ENCODE measurements at regions of chr16 and their contacts with region 1.

Region 1: DNA sequence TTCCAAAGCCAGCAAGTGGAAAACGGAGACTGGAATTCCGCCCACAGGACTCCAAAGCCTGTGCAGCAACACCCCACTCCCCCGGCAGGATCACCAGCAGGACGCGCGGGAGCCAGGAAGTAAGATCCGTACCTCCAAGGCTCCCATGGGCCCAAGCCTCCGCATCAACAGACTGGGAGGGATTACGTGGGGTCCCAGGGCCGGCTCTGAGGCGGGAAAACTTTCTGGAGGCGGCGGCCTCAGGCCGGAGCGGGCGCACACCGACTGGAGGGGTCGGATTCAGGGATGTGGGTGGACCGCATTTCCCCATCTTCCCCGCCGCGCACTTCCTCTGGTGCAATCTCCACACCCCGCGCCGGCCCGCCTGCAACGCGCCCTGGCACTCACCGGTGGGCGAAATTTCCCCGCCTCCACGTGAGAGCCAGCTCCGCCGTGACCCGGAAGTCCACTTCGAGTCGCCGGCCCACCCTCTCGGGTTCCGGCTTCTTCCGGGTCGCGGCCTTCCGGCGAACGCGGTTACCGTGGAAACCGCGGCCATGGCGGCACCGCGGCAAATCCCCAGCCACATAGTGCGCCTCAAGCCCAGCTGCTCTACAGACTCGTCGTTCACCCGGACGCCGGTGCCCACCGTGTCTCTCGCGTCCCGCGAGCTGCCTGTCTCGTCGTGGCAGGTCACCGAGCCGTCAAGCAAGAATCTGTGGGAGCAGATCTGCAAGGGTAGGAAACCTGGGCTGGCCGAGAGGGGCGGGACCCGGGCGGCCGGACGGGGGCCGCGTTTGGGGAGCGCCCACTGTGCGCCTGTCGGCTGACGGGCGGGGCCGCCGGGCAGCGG is at the starts of genes IQCK and KNOP1:
- DNase-seq: peak; percentile 83 to 87
- ATAC-seq: peak; percentile 89 to 90
- H3K4me3 ChIP-seq: peak within 1 kb of the TSS; percentile 83 to 95 (median 94)
- H3K27ac ChIP-seq: peak within 1 kb of the TSS; percentile 82 to 87 (median 86)
- H3K4me1 ChIP-seq: peaks cover 27% of the 10 kb centered on the region in 2 donors
- H3K27me3 ChIP-seq: no peaks in the 10 kb centered on the region
- CTCF ChIP-seq: peak in 2 of 5 experiments; percentile 26 to 28
- POLR2A ChIP-seq: peak; percentile 53 to 56
- total RNA-seq, gene IQCK: 8.3 to 17.3 (median 9.4) TPM
- total RNA-seq, gene KNOP1: 4.1 to 9.2 (median 5.5) TPM

Region 2: DNA sequence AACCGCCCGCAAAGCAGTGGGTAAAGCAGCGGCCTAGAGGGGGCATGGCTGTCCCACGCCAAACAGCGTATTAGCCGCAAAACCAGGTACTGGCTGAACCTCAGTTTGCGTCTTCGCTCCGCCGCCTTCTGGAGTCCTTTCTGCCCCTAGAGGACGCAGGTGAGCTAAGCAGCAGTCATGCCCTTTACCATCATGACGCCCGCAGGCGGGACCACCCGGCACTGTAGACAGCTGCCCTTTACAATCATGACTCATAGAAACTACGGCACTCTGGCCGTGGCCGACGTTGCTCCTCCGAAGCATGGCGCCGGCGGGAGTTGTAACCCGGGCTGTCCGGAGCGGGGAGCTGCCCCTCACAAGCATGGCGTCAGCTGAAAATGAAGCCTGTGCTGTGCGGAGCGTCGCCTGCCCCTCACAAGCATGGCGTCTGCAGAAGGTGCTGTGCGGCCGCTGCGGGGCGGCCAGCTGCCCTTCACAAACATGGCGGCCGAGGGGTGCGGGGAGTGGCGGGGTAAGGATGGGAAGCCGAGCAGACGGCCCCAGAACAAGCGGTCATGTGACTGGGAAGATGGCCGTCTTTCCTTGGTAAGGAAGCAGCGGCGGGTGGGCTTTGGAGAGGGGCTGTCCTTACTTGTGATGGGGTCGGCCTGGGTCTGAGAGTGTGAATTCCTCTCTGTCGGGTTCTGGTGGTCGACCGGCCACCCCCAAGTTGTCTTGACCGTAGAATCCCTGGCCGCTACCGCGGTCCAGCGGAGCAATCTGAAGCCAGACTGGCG is 162.6 kb before region 1 on chr16 and contains the start of gene VPS35L:
- in situ Hi-C with region 1: no loop called
- intact Hi-C with region 1: loop called (anchors 2 kb)
- DNase-seq: peak; percentile 93 to 98
- ATAC-seq: peak; percentile 95 to 98
- H3K4me3 ChIP-seq: peak within 1 kb of the TSS; percentile 59 to 95 (median 64)
- H3K27ac ChIP-seq: peak within 1 kb of the TSS; percentile 91 to 95 (median 92)
- H3K4me1 ChIP-seq: peaks cover 8 to 17% of the 10 kb centered on the region in 2 donors
- H3K27me3 ChIP-seq: no peaks in the 10 kb centered on the region
- CTCF ChIP-seq: peak; percentile 81 to 86 (median 82)
- POLR2A ChIP-seq: peak; percentile 48 to 49
- total RNA-seq, gene VPS35L: 16.9 to 29.1 (median 24.8) TPM

Region 3: GRCh38 chr16:19680881-19681340 is 37.1 kb before region 1 on chr16:
- in situ Hi-C with region 1: no loop called
- intact Hi-C with region 1: no loop called
- DNase-seq: no peak
- ATAC-seq: no peak
- H3K4me3 ChIP-seq: no peak overlapping the region
- H3K27ac ChIP-seq: peak overlapping the region in 1 of 4 donors; percentile 78
- H3K4me1 ChIP-seq: peaks cover 0 to 35% of the 10 kb centered on the region in 2 donors
- H3K27me3 ChIP-seq: no peaks in the 10 kb centered on the region
- CTCF ChIP-seq: peak in 2 of 5 experiments; percentile 17 to 21
- POLR2A ChIP-seq: no peak

Region 4: GRCh38 chr16:19696328-19696727 is 21.7 kb before region 1 on chr16:
- in situ Hi-C with region 1: no loop called
- intact Hi-C with region 1: loop called (anchors 2 kb)
- DNase-seq: peak; percentile 55 to 67
- ATAC-seq: peak in 1 of 2 donors; percentile 57
- H3K4me3 ChIP-seq: no peak overlapping the region
- H3K27ac ChIP-seq: peak overlapping the region; percentile 68 to 77 (median 74)
- H3K4me1 ChIP-seq: peaks cover 28 to 54% of the 10 kb centered on the region in 2 donors
- H3K27me3 ChIP-seq: no peaks in the 10 kb centered on the region
- CTCF ChIP-seq: no peak
- POLR2A ChIP-seq: no peak